A549 (cell line): ENCODE measurements at regions of chr5 and their contacts with region 1.

Region 1: GRCh38 chr5:36734422-36734821 is 128.0 kb downstream of the SLC1A3 start:
- DNase-seq: peak in 1 of 2 experiments; percentile 52
- ATAC-seq: peak; percentile 75 to 87; a peak in 5 of 6 replicates
- H3K4me3 ChIP-seq: no peak overlapping the region
- H3K27ac ChIP-seq: no peak overlapping the region
- H3K4me1 ChIP-seq: no peaks in the 10 kb centered on the region
- CTCF ChIP-seq: peak; percentile 40
- EP300 ChIP-seq: no peak
- POLR2A ChIP-seq: no peak
- RAD21 ChIP-seq: peak; percentile 41 to 47; a peak in 4 of 5 replicates

Region 2: DNA sequence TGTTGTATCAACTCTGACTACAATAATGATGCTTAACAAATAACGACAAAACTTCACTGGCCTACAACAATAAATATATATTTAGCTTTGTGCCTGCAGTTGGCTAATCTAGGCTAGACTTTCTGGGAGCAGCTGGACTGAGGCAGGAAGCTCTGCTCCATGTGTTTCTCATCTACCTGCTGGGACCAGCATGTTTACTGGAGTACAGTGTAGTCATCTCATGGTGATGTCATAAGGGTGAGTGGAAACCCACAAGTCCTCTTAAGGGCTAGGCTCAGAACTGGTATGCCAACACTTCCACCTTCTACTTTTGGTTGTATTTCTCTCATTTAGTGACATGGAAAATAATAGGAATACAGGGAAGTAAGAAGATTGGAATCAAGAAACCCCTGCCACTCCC is 56.4 kb after region 1 on chr5:
- CTCF ChIA-PET with region 1: no interaction called
- POLR2A ChIA-PET with region 1: no interaction called
- DNase-seq: no peak
- ATAC-seq: no peak
- H3K4me3 ChIP-seq: no peak overlapping the region
- H3K27ac ChIP-seq: no peak overlapping the region
- H3K4me1 ChIP-seq: no peaks in the 10 kb centered on the region
- CTCF ChIP-seq: no peak
- EP300 ChIP-seq: no peak
- POLR2A ChIP-seq: no peak
- RAD21 ChIP-seq: no peak

Region 3: GRCh38 chr5:37005946-37006540 is 271.6 kb after region 1 on chr5:
- CTCF ChIA-PET with region 1: interaction called, 13 read pairs
- POLR2A ChIA-PET with region 1: no interaction called
- DNase-seq: peak; percentile 10 to 31
- ATAC-seq: peak in 1 of 2 experiments; percentile 67; a peak in 3 of 6 replicates
- H3K4me3 ChIP-seq: no peak overlapping the region
- H3K27ac ChIP-seq: no peak overlapping the region
- H3K4me1 ChIP-seq: peaks cover 7% of the 10 kb centered on the region; the same call in 2 of the 3 replicates
- CTCF ChIP-seq: peak; percentile 72
- EP300 ChIP-seq: no peak
- POLR2A ChIP-seq: no peak
- RAD21 ChIP-seq: peak; percentile 61 to 65